Cardiac septum (tissue), 1 donor: ENCODE measurements at regions of chr7 and their contacts with region 1.

Region 1: DNA sequence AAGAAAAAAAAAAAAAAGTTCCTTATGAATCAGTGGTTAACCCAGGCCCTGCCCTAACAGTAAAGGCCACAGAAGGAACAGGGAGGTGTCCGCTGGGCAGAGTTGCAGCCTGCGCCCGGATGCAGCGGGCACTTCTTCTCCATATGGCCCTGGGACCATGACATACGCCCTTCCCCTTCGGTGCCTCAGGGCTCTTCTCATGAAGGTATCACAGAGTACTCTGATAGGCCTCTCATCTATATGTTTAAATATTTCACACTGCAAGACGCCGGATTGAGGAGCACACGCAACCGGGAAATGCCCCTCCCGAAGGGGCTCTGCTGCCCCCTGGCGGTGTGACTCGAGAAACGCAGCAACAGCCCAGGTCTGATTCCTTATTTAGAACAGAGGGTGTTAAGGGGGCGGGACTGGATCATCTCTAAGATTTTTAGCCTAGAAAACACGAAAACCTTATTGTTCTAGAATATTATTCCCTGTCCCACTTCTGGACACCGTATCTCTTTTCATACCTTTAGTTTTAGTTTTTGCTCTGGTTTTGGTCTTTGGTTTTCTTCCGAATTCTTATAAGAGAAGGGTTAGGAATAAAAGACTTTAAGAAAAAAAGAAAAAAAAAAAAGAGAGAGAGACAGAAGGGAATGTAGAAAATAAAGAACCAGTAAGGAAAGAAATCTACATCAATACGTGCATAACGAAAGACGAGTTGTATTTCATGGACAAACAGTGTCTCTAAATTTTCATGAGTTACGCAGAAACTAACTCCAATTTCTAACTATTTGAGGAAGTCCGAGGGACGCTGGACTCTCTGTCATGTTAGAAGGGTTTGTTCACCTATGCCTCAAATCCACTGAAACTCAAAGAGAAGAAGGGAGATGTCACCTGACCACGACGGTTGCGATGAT is 12.0 kb downstream of the DAGLB start:
- DNase-seq: peak; percentile 93

Region 2: DNA sequence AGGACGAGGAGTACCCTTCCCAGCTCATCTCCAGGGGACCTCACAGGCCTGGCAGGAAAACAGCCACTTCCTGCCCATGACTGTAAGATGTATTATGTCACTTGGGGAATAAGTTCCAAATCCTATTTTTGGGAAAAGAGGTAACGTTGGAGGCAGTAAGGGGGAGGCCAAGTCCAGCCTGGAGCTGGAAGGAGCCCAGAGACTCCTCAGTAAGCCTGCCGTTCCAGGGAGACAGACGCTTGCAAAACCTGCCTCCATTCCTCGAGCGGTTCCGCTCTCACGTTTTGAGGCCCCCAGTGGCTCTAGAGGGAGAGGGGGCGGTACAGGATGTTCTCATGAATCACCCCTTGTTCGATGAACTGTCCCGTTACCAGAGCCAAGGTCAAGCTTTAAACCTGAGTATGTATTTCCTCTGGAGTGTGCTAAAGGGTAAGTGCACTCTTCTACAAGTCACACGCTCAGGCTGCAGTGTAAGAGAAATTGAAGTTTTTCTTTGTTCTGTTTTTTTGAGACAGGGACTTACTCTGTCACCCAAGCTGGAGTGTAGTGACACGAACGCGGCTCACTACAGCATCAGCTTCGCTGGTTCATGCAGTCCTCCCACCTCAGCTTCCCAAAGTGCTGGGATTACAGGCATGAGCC is 117.8 kb before region 1 on chr7:
- intact Hi-C with region 1: no loop called
- DNase-seq: peak; percentile 85

Region 3: GRCh38 chr7:6392706-6393666 is 42.7 kb before region 1 on chr7:
- intact Hi-C with region 1: loop called (anchors 5 kb)
- DNase-seq: peak; percentile 84